Activated CD4-positive, alpha-beta memory T cell treated with anti-CD3 and anti-CD28 coated beads for 36 hours (primary cell): ENCODE measurements at regions of chr2 and their contacts with region 1.

Region 1: DNA sequence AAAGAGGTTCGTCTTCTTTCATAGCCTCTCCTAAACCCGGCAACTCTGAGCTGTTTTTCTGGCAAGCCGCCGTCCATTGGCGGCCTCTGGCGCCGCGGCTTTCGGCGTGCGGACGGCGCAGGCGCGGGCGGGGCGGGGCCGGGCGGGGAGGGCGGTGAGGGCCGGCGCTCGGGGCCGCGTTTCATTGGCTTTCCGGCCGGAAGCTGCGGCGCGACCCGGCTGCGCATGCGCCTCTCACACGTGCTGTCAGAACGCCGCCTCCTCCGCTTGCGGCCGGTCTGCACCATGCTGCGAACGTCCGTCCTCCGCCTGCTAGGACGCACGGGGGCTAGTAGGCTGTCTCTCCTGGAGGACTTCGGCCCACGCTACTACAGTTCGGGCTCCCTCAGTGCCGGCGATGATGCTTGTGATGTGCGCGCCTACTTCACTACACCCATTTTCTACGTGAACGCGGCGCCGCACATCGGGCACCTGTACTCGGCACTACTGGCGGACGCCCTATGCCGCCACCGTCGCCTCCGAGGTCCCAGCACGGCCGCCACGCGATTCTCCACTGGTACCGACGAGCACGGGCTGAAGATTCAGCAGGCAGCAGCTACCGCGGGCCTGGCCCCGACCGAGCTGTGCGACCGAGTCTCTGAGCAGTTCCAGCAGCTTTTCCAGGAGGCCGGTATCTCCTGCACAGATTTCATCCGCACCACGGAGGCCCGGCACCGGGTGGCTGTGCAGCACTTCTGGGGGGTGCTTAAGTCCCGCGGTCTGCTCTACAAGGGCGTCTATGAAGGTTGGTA is at the start of gene MARS2:
- DNase-seq: peak; percentile 95
- H3K4me3 Mint-ChIP-seq: peak within 1 kb of the TSS; percentile 80
- H3K27ac Mint-ChIP-seq: peak within 1 kb of the TSS; percentile 88
- H3K4me1 Mint-ChIP-seq: peaks cover 41% of the 10 kb centered on the region
- H3K27me3 Mint-ChIP-seq: no peaks in the 10 kb centered on the region
- total RNA-seq, gene MARS2: 11.3 to 11.4 TPM

Region 2: DNA sequence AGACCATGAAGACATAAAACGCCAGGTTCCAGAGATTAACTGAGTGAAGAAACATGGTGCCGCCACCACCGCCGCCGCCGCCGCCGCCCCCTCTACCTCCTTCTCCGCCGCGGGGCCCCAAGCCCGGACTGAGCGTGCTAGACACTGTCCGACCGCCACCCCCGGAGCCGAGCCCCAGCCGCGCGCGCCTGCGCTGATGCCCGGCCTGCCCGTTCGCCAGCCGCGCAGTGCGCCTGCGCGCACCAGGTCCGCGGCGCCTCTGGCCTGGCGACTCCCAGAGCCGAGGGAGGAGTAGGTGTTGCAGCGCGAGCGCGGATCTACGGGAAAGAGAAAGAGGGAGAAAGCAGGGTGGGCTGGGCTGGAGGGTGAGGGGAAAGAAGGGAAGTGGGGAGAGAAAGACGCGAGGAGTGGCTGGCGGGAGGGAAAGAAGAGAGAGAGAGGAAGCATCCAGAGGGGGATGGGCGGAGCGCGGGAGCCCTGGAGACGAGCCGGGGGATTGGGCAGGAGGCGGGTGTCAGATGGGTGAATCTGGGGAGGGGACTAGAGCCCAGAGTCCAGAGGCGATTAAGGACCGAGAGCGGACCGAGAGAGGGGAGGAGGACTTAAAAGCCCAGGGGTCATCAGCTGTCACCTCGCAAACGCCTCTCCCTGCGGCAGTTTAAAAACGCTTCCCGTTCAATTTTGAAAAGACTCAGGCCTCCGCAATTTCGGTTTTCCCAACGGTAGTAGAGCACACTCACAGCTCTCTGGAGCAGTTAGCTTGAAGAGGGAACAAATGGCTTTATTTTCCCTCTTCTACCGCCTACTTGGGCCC is 778.5 kb before region 1 on chr2 and contains the start of gene PGAP1:
- CTCF ChIA-PET with region 1: no interaction called
- POLR2A ChIA-PET with region 1: no interaction called
- intact Hi-C with region 1: loop called (anchors 10 kb)
- DNase-seq: peak; percentile 93
- H3K4me3 Mint-ChIP-seq: peak within 1 kb of the TSS; percentile 96
- H3K27ac Mint-ChIP-seq: peak within 1 kb of the TSS; percentile 100
- H3K4me1 Mint-ChIP-seq: peaks cover 35% of the 10 kb centered on the region
- H3K27me3 Mint-ChIP-seq: peaks cover 4% of the 10 kb centered on the region
- total RNA-seq, gene PGAP1: 24.5 to 25.5 TPM

Region 3: DNA sequence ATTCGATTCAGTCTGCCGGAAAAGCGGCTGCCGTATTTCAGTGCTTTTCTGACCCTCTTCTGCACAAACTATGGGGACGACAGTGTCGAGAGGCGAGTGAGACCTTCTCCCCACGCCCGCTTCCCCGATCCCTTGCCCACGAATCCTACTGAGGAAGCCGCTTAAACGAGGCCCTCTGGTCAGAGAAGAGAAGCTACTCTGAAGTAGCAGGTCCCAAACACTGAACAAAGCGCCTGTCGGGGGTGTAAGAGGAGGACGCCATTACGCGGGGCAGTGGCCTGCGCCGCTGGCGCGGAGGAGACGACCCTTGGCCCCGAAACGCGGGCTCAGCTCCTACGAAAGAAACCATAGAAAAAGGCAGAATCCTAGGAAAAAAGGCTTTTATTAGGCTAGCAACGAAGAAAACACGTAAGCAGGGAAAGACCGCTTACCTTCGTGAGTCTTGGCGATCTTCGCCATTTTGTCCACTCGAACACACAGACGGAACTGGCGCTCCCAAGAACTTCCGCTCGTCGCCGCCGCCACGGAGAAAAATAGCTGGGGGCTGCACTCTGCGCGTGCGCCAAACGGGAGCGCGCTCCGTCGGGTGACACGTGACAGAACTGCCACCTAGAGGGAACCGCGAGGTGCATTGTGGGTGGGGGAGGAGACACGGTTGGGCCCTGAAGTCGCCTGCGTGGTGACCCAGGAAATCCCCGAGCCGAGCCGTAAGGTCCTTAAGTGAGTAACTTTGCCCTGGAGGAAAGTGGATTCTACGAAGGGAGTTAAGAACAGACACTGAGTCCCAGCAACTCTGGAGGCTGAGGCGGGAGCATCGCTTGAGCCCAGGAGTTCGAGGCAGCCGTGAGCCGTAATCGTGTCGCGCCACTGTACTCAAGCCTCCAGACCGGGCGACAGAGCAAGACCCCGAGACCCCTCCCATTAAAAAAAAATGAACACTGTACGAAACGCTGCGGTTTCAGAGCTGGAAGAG is 270.5 kb before region 1 on chr2 and contains the start of gene SF3B1:
- CTCF ChIA-PET with region 1: no interaction called
- POLR2A ChIA-PET with region 1: no interaction called
- intact Hi-C with region 1: loop called (anchors 1 kb)
- DNase-seq: peak; percentile 100
- H3K4me3 Mint-ChIP-seq: peak within 1 kb of the TSS; percentile 97
- H3K27ac Mint-ChIP-seq: peak within 1 kb of the TSS; percentile 100
- H3K4me1 Mint-ChIP-seq: peaks cover 45% of the 10 kb centered on the region
- H3K27me3 Mint-ChIP-seq: peaks cover 1% of the 10 kb centered on the region
- total RNA-seq, gene SF3B1: 228 to 245 TPM

Region 4: GRCh38 chr2:197515739-197516392 is 189.4 kb before region 1 on chr2 and contains the start of gene MOB4:
- CTCF ChIA-PET with region 1: interaction called, 5 read pairs
- POLR2A ChIA-PET with region 1: interaction called, 10 read pairs
- intact Hi-C with region 1: loop called (anchors 1 kb)
- DNase-seq: peak; percentile 96
- H3K4me3 Mint-ChIP-seq: peak within 1 kb of the TSS; percentile 92
- H3K27ac Mint-ChIP-seq: peak within 1 kb of the TSS; percentile 88
- H3K4me1 Mint-ChIP-seq: peaks cover 24% of the 10 kb centered on the region
- H3K27me3 Mint-ChIP-seq: no peaks in the 10 kb centered on the region
- total RNA-seq, gene MOB4: 18.9 to 19.5 TPM

Region 5: GRCh38 chr2:197576631-197577030 is 128.7 kb before region 1 on chr2:
- CTCF ChIA-PET with region 1: no interaction called
- POLR2A ChIA-PET with region 1: no interaction called
- intact Hi-C with region 1: no loop called
- DNase-seq: no peak
- H3K4me3 Mint-ChIP-seq: no peak overlapping the region
- H3K27ac Mint-ChIP-seq: no peak overlapping the region
- H3K4me1 Mint-ChIP-seq: no peaks in the 10 kb centered on the region
- H3K27me3 Mint-ChIP-seq: no peaks in the 10 kb centered on the region

Region 6: GRCh38 chr2:197591339-197592072 is 113.8 kb before region 1 on chr2:
- CTCF ChIA-PET with region 1: no interaction called
- POLR2A ChIA-PET with region 1: no interaction called
- intact Hi-C with region 1: no loop called
- DNase-seq: no peak
- H3K4me3 Mint-ChIP-seq: no peak overlapping the region
- H3K27ac Mint-ChIP-seq: no peak overlapping the region
- H3K4me1 Mint-ChIP-seq: no peaks in the 10 kb centered on the region
- H3K27me3 Mint-ChIP-seq: peaks cover 10% of the 10 kb centered on the region

Region 7: GRCh38 chr2:197851451-197851850 is 146.1 kb after region 1 on chr2:
- CTCF ChIA-PET with region 1: no interaction called
- POLR2A ChIA-PET with region 1: no interaction called
- intact Hi-C with region 1: no loop called
- DNase-seq: no peak
- H3K4me3 Mint-ChIP-seq: no peak overlapping the region
- H3K27ac Mint-ChIP-seq: no peak overlapping the region
- H3K4me1 Mint-ChIP-seq: peaks cover 56% of the 10 kb centered on the region
- H3K27me3 Mint-ChIP-seq: no peaks in the 10 kb centered on the region

Region 8: GRCh38 chr2:197889041-197889440 is 183.7 kb after region 1 on chr2:
- CTCF ChIA-PET with region 1: no interaction called
- POLR2A ChIA-PET with region 1: no interaction called
- intact Hi-C with region 1: loop called (anchors 5 kb)
- DNase-seq: peak; percentile 58
- H3K4me3 Mint-ChIP-seq: no peak overlapping the region
- H3K27ac Mint-ChIP-seq: peak overlapping the region; percentile 79
- H3K4me1 Mint-ChIP-seq: peaks cover 36% of the 10 kb centered on the region
- H3K27me3 Mint-ChIP-seq: no peaks in the 10 kb centered on the region

Region 9: DNA sequence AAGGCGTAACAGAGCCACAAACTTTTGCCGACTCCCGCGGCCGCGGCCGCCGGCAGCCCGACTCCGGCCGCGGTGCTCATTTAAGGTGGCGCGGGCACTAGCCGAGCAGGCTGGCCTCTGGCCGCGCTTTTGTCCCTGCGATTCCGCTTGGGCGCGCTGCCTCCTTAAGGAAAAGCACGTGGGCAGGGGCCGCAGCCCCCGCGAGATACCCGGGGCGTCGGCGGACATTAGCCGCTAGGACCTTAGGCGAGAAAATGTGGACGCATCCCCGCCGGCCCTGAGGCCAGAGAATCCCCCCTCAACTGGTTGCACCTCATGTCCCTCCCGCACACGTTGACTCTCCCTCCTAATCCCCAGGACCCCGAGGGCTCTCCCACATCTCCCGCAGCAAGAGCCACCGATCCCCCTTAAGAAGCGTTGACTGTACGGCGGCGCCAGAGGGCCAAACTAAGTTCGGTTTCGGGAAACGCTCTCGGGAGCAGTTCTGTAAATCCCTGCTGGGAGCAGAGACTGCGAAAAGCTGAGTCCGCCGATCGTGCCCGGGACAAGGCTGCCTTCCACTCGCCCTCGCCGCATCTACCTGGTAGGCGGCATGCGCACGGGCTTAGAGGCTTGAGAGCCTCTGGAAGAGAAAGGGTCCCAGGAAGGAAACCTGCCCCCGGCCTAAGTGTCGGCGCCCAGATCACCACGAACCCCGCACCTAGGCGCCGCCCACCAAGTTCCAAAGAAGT is 1754.1 kb after region 1 on chr2:
- CTCF ChIA-PET with region 1: no interaction called
- POLR2A ChIA-PET with region 1: no interaction called
- intact Hi-C with region 1: loop called (anchors 10 kb)
- DNase-seq: peak; percentile 77
- H3K4me3 Mint-ChIP-seq: peak overlapping the region; percentile 80
- H3K27ac Mint-ChIP-seq: peak overlapping the region; percentile 28
- H3K4me1 Mint-ChIP-seq: peaks cover 30% of the 10 kb centered on the region
- H3K27me3 Mint-ChIP-seq: peaks cover 59% of the 10 kb centered on the region